IMR-90 (cell line): ENCODE measurements at regions of chr2 and their contacts with region 1.

Region 1: GRCh38 chr2:17282245-17282644 is 236.0 kb downstream of the RAD51AP2 start:
- DNase-seq: no peak
- ATAC-seq: no peak
- H3K4me3 ChIP-seq: no peak overlapping the region
- H3K27ac ChIP-seq: no peak overlapping the region
- H3K4me1 ChIP-seq: no peaks in the 10 kb centered on the region
- H3K27me3 ChIP-seq: no peaks in the 10 kb centered on the region
- CTCF ChIP-seq: no peak
- POLR2A ChIP-seq: no peak
- RAD21 ChIP-seq: no peak

Region 2: GRCh38 chr2:17442334-17442733 is 160.1 kb after region 1 on chr2:
- CTCF ChIA-PET with region 1: no interaction called
- POLR2A ChIA-PET with region 1: no interaction called
- dilution Hi-C with region 1: no loop called
- in situ Hi-C with region 1: no loop called
- intact Hi-C with region 1: no loop called
- DNase-seq: peak; percentile 1
- ATAC-seq: no peak
- H3K4me3 ChIP-seq: no peak overlapping the region
- H3K27ac ChIP-seq: no peak overlapping the region
- H3K4me1 ChIP-seq: no peaks in the 10 kb centered on the region
- H3K27me3 ChIP-seq: no peaks in the 10 kb centered on the region
- CTCF ChIP-seq: no peak
- POLR2A ChIP-seq: no peak
- RAD21 ChIP-seq: no peak

Region 3: GRCh38 chr2:18599509-18600254 is 1317.4 kb after region 1 on chr2:
- CTCF ChIA-PET with region 1: no interaction called
- POLR2A ChIA-PET with region 1: no interaction called
- dilution Hi-C with region 1: no loop called
- in situ Hi-C with region 1: no loop called
- intact Hi-C with region 1: loop called (anchors 5 kb)
- DNase-seq: peak; percentile 32
- ATAC-seq: peak; percentile 53
- H3K4me3 ChIP-seq: no peak overlapping the region
- H3K27ac ChIP-seq: no peak overlapping the region
- H3K4me1 ChIP-seq: peaks cover 7% of the 10 kb centered on the region; the same call in 1 of the 2 replicates
- H3K27me3 ChIP-seq: no peaks in the 10 kb centered on the region
- CTCF ChIP-seq: no peak
- POLR2A ChIP-seq: no peak
- RAD21 ChIP-seq: no peak